OCI-LY7 (cell line): ENCODE measurements at regions of chr15 and their contacts with region 1.

Region 1: GRCh38 chr15:59247364-59247763 is 40.7 kb downstream of the LDHAL6B start:
- DNase-seq: peak; percentile 88
- H3K4me3 ChIP-seq: no peak overlapping the region
- H3K27ac ChIP-seq: no peak overlapping the region
- H3K4me1 ChIP-seq: peaks cover 64% of the 10 kb centered on the region
- CTCF ChIP-seq: peak; percentile 93

Region 2: DNA sequence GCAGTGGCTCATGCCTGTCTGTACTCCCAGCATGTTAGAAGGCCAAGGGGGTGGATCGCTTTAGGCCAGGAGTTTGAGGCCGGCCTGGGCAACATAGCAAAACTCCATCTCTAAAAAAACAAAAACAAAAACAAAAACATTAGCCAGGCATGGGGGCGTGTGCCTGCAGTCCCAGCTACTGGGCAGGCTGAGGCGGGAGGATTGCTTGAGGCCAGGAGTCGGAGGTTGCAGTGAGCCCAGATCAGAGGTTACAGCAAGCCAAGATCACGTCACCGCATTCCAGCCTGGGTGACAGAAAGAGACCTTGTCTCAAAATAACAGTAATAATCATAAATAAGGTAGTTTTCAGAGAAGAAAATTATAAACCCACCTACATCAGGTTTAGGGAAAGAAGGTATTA is 15.0 kb after region 1 on chr15:
- CTCF ChIA-PET with region 1: no interaction called
- POLR2A ChIA-PET with region 1: no interaction called
- intact Hi-C with region 1: no loop called
- DNase-seq: no peak
- H3K4me3 ChIP-seq: no peak overlapping the region
- H3K27ac ChIP-seq: no peak overlapping the region
- H3K4me1 ChIP-seq: peaks cover 20% of the 10 kb centered on the region
- CTCF ChIP-seq: no peak

Region 3: DNA sequence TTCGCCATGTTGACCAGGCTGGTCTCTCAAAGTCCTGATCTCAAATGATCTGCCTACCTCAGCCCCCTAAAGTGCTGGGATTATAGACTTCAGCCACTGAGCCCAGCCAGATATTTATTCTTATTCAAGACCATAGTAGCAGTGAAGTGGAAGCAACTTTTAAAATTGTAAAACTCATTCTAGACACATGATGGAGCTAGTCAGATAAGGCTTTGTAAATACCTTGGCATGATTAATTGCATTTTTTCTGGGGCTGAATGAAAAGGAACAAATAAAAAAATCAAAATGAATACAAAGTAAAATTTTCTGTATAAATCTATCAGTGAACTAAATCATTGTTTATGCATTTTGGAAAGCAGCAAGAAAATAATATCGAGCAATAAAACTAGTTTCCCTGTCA is 129.4 kb after region 1 on chr15:
- CTCF ChIA-PET with region 1: interaction called, 3 read pairs
- POLR2A ChIA-PET with region 1: no interaction called
- intact Hi-C with region 1: loop called (anchors 5 kb)
- DNase-seq: peak; percentile 65
- H3K4me3 ChIP-seq: no peak overlapping the region
- H3K27ac ChIP-seq: no peak overlapping the region
- H3K4me1 ChIP-seq: peaks cover 24% of the 10 kb centered on the region
- CTCF ChIP-seq: peak; percentile 78